ENCODE measurements at regions of chr10 and their contacts with region 1.

Region 1: DNA sequence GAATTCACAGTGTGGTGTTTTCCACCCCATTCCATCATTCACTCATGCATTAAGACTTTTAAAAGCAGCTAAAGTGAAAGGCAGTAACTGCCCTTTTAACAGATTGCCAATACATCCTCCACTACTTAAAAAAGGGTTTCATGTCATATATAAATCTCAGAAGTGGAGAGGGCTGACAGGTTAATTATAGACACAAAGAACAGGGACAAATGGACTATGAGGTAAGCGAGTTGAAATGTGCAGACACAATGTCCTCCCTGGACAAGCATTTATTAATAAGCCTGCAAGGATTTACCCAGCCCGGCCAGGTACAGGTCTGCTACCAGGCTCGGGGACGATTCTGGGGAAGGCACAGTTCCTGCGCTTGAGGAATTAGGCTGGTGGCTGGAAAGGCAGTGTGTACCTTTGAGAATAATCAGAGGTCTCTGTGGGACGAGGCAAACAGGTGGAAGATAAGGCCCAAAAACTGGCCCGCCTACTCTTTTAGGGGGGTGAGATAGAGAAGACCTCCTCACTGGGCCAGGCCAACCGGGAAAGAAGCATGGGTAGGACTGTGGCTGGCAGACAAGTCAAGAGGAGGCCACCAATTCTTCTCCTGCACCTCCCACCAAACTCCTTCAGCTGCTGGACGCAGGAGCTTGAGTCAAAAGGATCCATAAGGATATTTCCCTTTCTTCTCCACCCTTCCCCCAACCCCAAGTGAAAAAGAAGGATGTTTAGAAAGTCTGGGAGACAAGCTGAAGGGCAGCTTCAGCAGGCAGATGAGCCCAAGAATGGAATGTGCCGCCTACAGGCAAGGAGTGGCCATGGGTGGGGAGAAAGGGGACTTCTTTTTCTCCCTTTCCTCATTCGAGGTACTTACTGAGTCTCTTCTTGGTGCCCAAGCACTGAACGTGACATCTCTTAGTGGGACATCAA is 1.5 kb downstream of the PDLIM1 start:
- DNase-seq: no peak
- H3K4me3 ChIP-seq: peak overlapping the region; percentile 75 to 93 (median 86)
- H3K27ac ChIP-seq: no peak overlapping the region
- H3K4me1 ChIP-seq: peaks cover 5 to 15% (median 9%) of the 10 kb centered on the region in 4 experiments; a peak in 6 of 7 replicates
- H3K27me3 ChIP-seq: peaks cover 0 to 6% (median 4%) of the 10 kb centered on the region in 4 experiments; a peak in 5 of 7 replicates
- CTCF ChIP-seq: peak; percentile 25 to 59 (median 49); a peak in 3 of 4 replicates
- EP300 ChIP-seq: no peak
- POLR2A ChIP-seq: peak in 1 of 2 experiments; percentile 40; a peak in 2 of 3 replicates
- RAD21 ChIP-seq: peak; percentile 39 to 41; a peak in 2 of 4 replicates

Region 2: DNA sequence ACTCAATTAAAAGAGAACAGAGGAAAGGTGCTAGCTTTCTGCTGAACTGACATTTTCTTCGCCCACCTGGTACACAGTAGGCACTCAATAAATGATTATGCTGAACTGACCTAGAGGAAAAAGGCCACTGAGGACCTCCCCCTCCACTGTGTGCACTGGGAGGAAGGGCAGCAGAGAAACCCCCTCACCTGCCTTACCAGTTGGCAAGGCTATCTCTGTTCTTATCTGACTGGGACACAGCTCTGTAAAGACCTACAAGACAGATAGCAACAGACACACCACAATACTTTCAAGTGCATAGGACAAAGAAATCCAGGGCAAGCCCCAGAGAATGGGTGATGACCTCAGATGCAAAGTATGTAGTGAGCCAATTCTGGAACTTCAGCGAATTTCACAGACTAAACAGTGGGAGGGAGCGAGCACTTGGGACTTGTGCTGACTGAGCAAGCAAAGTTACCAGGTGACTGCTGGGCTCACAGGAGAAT is 28.8 kb before region 1 on chr10:
- CTCF ChIA-PET with region 1: interaction called, 4 read pairs
- POLR2A ChIA-PET with region 1: interaction called, 10 read pairs
- DNase-seq: peak in 1 of 2 experiments; percentile 28
- H3K4me3 ChIP-seq: no peak overlapping the region
- H3K27ac ChIP-seq: no peak overlapping the region
- H3K4me1 ChIP-seq: peaks cover 5 to 21% (median 12%) of the 10 kb centered on the region in 4 experiments
- H3K27me3 ChIP-seq: no peaks in the 10 kb centered on the region
- CTCF ChIP-seq: no peak
- EP300 ChIP-seq: no peak
- POLR2A ChIP-seq: no peak
- RAD21 ChIP-seq: no peak

Region 3: DNA sequence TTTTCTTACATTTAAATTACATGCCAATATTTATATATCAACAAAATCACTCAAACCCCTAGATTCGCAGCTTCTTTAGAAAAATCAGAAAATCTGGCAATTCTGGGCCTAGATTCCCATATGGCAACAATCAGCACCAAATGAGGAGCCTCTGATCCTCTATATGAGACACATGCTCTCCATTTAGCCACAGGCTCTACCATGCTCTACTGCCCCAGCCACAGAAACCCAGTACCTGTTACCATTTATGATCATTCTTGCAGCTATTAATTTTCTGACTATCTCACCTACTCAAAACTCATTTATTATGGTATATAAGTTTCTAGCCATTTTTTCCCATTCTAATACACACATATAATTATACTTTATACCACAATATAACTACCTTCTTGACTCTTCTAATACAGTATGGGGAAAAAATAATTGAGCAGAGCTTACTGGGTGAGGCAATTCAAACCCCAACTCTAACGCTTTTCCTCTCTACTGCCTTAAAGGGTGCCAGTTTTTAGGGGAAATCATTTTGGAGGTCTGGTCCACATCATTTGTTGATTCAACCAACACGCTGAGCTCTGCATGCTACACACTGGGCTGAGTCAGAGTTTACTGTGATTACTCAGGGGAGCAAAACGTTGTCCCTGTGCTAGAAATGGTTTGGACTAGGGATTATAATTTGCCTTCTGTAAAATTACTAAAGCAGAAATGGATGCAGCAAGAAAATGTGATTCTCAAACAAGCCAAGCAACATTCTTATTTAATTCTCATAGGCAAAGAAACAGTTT is 10.0 kb before region 1 on chr10:
- CTCF ChIA-PET with region 1: interaction called, 16 read pairs
- POLR2A ChIA-PET with region 1: interaction called, 18 read pairs
- DNase-seq: no peak
- H3K4me3 ChIP-seq: no peak overlapping the region
- H3K27ac ChIP-seq: no peak overlapping the region
- H3K4me1 ChIP-seq: peaks cover 0 to 17% (median 5%) of the 10 kb centered on the region in 4 experiments; a peak in 3 of 7 replicates
- H3K27me3 ChIP-seq: no peaks in the 10 kb centered on the region
- CTCF ChIP-seq: no peak
- EP300 ChIP-seq: no peak
- POLR2A ChIP-seq: no peak
- RAD21 ChIP-seq: no peak

Region 4: DNA sequence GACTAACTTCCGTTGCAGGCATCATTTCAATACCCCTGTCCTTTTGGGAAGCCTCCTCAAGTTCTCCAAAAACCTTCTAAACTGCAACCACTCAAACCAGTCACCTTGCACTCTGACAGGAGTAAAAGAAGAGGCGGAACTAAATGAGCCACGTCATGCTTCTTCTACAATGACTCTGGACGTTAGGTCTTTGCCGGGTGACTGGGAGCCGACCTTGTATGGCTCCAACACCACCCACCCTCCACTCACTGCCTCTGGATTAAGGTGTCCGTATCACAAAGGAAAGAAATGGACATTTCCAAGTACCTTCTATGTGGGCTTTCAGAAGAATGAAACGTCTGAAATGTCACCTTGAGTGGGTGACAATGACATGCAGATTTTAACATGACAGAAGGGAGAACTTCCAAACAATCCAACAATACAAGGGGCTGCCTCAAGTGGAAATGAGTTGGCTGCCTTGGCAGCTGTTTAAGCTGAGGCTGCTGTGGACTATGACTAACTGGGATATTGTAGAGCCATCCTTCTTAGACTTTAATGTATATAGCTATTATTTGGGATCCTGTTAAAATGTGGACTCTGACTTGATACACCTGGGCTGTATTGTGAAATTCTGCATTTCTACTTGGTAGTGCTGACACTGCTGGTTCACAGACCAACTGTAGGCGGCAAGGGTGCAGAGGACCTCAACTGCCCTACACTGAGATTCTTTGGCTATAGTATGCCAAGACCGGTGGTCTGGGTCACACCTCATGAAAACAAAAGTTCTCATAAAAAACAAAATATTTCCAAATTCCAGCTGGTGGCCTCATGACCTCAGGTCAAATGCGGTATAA is 35.4 kb after region 1 on chr10:
- CTCF ChIA-PET with region 1: no interaction called
- POLR2A ChIA-PET with region 1: no interaction called
- DNase-seq: no peak
- H3K4me3 ChIP-seq: no peak overlapping the region
- H3K27ac ChIP-seq: no peak overlapping the region
- H3K4me1 ChIP-seq: peaks cover 0 to 2% (median 0%) of the 10 kb centered on the region in 4 experiments; a peak in 1 of 7 replicates
- H3K27me3 ChIP-seq: no peaks in the 10 kb centered on the region
- CTCF ChIP-seq: no peak
- EP300 ChIP-seq: no peak
- POLR2A ChIP-seq: no peak
- RAD21 ChIP-seq: no peak

Region 5: DNA sequence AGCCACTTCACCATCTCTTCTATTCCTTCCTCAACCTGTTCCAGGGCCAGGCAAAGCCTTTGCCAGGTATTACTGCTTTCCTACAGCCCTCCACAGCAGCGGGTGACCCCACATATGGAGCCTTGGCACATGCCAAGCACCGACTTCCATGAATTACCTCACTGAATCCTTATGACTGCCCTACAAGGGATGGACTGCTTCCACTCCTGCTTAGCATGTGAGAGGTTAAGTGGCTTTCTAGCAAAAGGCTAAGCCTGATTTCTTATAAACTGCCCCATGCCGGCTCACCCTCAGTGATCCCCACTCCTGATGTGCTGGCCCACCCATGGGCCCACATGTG is 45.5 kb after region 1 on chr10:
- CTCF ChIA-PET with region 1: no interaction called
- POLR2A ChIA-PET with region 1: no interaction called
- DNase-seq: no peak
- H3K4me3 ChIP-seq: no peak overlapping the region
- H3K27ac ChIP-seq: no peak overlapping the region
- H3K4me1 ChIP-seq: peaks cover 0 to 6% (median 0%) of the 10 kb centered on the region in 4 experiments; a peak in 1 of 7 replicates
- H3K27me3 ChIP-seq: no peaks in the 10 kb centered on the region
- CTCF ChIP-seq: no peak
- EP300 ChIP-seq: no peak
- POLR2A ChIP-seq: no peak
- RAD21 ChIP-seq: no peak